BJ (cell line): ENCODE measurements at regions of chr10 and their contacts with region 1.

Region 1: GRCh38 chr10:68208424-68209042 is 23.4 kb downstream of the ATOH7 start:
- DNase-seq: no peak
- H3K4me3 ChIP-seq: no peak overlapping the region
- H3K27me3 ChIP-seq: no peaks in the 10 kb centered on the region
- CTCF ChIP-seq: peak; percentile 72

Region 2: GRCh38 chr10:67849331-67850011 is 359.1 kb before region 1 on chr10:
- CTCF ChIA-PET with region 1: interaction called, 19 read pairs
- POLR2A ChIA-PET with region 1: no interaction called
- DNase-seq: peak; percentile 72
- H3K4me3 ChIP-seq: peak overlapping the region; percentile 56
- H3K27me3 ChIP-seq: no peaks in the 10 kb centered on the region
- CTCF ChIP-seq: no peak

Region 3: GRCh38 chr10:67875340-67876238 is 332.9 kb before region 1 on chr10:
- CTCF ChIA-PET with region 1: no interaction called
- POLR2A ChIA-PET with region 1: no interaction called
- DNase-seq: no peak
- H3K4me3 ChIP-seq: no peak overlapping the region
- H3K27me3 ChIP-seq: no peaks in the 10 kb centered on the region
- CTCF ChIP-seq: no peak

Region 4: GRCh38 chr10:68082872-68083271 is 125.7 kb before region 1 on chr10:
- CTCF ChIA-PET with region 1: interaction called, 15 read pairs
- POLR2A ChIA-PET with region 1: no interaction called
- DNase-seq: no peak
- H3K4me3 ChIP-seq: no peak overlapping the region
- H3K27me3 ChIP-seq: no peaks in the 10 kb centered on the region
- CTCF ChIP-seq: peak; percentile 55

Region 5: DNA sequence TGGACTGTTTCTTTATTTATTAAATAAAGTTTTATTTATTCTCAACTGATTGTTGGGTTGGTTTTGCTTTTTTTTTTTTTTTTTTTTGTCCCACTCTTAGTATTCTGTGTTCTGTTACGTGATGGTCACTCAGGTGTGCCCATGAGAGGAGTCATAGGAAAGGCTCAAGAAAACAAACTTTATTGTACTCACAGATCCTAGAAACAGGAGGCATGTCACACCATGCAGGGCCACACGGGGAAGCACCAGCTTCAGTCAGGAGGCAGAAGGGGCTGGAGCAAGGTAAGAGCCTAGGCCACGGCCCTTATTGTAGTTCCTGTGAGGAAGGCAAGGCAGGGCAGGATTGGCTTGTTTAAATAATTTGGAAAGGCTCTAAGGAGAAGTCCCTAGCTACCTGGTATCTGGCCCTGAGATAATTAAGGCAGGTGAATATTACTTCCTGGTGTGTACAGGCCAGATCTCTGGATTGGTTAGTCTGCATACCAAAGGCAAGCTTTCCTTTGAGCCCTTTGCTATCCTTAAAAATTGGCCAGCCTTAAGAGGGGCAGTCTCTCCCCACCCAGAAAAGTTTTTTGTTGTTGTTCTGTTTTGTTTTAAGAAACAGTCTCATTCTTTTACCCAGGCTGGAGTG is 15.1 kb after region 1 on chr10:
- CTCF ChIA-PET with region 1: interaction called, 18 read pairs
- POLR2A ChIA-PET with region 1: no interaction called
- DNase-seq: no peak
- H3K4me3 ChIP-seq: no peak overlapping the region
- H3K27me3 ChIP-seq: no peaks in the 10 kb centered on the region
- CTCF ChIP-seq: no peak

Region 6: DNA sequence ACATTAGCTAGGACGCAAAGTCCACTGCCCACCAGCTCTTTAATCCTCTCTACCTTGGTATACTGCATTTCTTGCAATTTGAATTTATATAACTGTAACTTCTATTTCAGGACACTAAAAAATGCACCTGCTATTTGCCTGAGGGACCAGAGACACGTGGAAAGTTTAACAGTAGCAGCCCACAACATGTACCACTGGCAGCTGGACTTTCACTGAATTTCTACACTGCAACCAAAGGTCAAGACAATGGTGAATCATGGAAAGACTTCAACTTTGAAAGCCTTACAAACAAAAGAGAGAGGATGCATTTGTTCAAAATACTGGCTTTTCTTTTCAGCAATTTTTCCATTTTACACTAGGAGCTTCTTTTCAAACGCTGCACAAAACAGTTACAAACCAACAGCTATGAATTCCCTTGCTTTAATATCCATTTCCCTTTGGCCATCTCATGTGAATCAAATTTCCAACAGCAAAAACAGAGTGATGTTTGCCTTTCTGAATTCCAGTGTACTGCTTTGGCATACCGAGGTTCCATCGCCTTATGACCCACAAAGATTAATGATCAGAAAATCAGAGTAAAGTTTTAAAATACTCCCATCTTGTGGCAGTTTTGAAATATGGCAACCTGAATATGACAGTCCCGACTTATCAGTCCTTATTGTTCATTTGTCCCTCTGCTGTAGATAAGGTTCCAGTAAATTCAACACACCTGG is 93.4 kb after region 1 on chr10:
- CTCF ChIA-PET with region 1: interaction called, 93 read pairs
- POLR2A ChIA-PET with region 1: no interaction called
- DNase-seq: peak; percentile 24
- H3K4me3 ChIP-seq: no peak overlapping the region
- H3K27me3 ChIP-seq: no peaks in the 10 kb centered on the region
- CTCF ChIP-seq: peak; percentile 50

Region 7: DNA sequence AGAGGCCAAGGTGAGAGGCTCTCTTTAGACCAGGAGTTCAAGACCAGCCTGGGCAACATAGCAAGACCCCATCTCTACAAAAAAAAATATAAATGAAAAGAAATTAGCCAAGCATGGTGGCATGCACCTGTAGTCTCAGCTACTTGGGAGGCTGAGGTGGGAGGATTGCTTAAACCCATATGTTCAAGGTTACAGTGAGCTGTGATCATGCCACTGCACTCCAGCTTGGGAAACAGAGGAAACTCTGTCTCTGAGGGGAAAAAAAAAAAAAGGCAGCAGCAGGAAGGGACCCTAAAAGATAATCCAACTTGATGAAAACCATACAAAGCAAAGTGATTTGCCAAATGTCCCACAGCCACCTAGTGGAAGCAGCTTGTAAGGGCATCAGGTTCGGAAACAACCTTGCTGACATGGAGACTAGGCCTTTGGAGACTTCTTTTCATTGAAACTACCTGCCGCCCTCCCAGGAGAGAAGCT is 139.8 kb after region 1 on chr10:
- CTCF ChIA-PET with region 1: interaction called, 16 read pairs
- POLR2A ChIA-PET with region 1: no interaction called
- DNase-seq: no peak
- H3K4me3 ChIP-seq: no peak overlapping the region
- H3K27me3 ChIP-seq: no peaks in the 10 kb centered on the region
- CTCF ChIP-seq: peak; percentile 81

Region 8: DNA sequence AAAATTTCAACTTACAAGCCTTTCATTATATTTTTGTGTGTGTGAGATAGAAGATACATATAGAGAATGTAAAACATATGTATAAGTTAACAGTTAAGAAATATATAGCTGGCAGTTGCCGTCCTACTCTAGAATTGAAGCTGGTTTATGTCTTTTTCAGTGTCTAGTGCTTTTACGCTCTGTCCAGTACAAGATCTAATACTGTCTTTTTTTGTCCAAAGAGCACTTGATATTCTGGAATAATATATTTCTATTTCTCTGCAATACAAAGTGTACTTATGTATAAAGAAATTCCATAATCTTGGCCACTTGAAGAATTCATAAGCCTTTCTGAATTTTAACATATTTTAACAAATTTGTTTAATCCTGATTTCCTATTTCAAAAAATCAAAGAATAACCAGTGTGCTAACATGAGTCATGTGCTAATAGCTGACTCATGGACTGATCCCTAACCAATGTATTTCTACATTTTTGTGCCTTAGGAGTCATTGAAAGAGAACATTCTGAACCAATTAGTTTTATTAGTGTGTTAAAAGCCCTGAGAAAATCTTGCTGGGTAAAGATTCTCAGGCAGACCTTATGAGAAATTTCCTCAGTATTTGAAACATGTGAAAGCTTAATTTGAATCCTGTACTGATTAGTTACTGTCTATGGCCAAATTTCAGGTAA is 439.3 kb after region 1 on chr10:
- CTCF ChIA-PET with region 1: no interaction called
- POLR2A ChIA-PET with region 1: no interaction called
- DNase-seq: peak; percentile 90
- H3K4me3 ChIP-seq: no peak overlapping the region
- H3K27me3 ChIP-seq: no peaks in the 10 kb centered on the region
- CTCF ChIP-seq: no peak